OCI-LY7 (cell line): ENCODE measurements at regions of chr19 and their contacts with region 1.

Region 1: DNA sequence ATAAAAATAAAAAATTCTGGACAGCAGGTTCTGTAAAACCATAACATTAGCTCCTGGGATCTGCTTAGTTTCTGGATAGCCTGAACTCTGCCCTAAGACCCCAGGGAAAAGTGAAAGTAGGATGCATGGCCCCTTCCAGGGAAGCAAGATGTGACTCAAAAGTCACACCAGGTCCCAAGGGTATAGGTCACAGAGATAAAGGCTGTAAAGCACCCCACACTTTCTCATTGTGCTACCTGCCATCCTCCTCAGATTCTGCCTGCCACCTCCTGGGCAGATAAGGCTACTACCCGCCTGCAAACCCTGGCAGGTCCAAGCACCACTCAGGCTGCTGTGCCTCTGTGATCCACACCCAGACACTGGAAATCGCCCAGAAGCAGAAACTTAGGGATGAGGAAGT is 20.6 kb downstream of the FFAR2 start:
- DNase-seq: peak; percentile 76
- H3K4me3 ChIP-seq: no peak overlapping the region
- H3K27ac ChIP-seq: no peak overlapping the region
- H3K4me1 ChIP-seq: peaks cover 2% of the 10 kb centered on the region
- CTCF ChIP-seq: peak; percentile 81

Region 2: GRCh38 chr19:35269421-35270117 is 199.1 kb before region 1 on chr19:
- CTCF ChIA-PET with region 1: no interaction called
- POLR2A ChIA-PET with region 1: no interaction called
- intact Hi-C with region 1: loop called (anchors 1 kb)
- DNase-seq: peak; percentile 90
- H3K4me3 ChIP-seq: peak overlapping the region; percentile 75
- H3K27ac ChIP-seq: peak overlapping the region; percentile 61
- H3K4me1 ChIP-seq: peaks cover 43% of the 10 kb centered on the region
- CTCF ChIP-seq: peak; percentile 73

Region 3: GRCh38 chr19:35318650-35319448 is 149.8 kb before region 1 on chr19:
- CTCF ChIA-PET with region 1: no interaction called
- POLR2A ChIA-PET with region 1: no interaction called
- intact Hi-C with region 1: loop called (anchors 1 kb)
- DNase-seq: no peak
- H3K4me3 ChIP-seq: peak overlapping the region; percentile 1
- H3K27ac ChIP-seq: peak overlapping the region; percentile 88
- H3K4me1 ChIP-seq: peaks cover 86% of the 10 kb centered on the region
- CTCF ChIP-seq: no peak

Region 4: DNA sequence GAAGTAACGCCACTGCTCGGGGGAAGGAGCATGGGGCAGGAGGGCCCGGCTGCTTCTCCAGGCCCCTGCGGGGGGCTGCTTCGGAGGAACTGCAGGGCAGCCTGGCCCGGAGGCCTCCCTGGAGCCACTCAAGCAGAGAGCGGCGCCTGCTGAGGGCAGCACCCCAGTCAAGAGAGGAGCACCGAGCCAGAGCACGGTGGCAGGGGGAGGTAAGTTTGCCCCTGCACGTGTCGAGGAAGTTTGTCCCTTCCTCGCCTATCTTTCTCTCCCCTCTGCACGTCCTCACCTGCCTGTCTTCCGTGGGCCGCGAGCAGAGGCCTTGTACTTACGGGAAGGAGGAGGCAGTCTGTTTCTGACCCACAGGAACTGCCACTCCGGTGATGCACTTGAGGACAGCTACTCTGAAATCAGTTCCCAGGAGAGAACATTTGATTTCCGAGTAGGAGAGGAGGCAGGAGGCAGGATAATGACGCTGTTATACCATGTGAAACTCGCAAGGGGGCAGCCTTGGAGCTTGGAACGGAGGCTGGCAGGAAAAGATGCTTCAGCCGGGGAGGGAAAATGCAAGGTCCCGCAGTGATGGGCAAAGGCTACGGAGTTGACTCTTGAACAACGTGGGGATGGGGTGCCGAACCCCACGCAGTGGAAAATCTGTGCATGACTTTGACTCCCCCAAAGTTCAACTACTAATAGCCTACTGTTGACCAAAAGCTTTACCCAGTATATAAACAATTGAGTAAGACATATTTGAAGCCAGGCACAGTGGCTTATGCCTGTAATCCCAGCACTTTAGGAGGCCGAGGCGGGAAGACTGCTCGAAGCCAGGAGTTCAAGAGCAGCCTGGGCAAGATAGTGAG is 116.0 kb before region 1 on chr19:
- CTCF ChIA-PET with region 1: no interaction called
- POLR2A ChIA-PET with region 1: interaction called, 4 read pairs
- intact Hi-C with region 1: loop called (anchors 1 kb)
- DNase-seq: peak; percentile 78
- H3K4me3 ChIP-seq: no peak overlapping the region
- H3K27ac ChIP-seq: peak overlapping the region; percentile 27
- H3K4me1 ChIP-seq: peaks cover 54% of the 10 kb centered on the region
- CTCF ChIP-seq: peak; percentile 92

Region 5: GRCh38 chr19:35395382-35396199 is 73.0 kb before region 1 on chr19:
- CTCF ChIA-PET with region 1: no interaction called
- POLR2A ChIA-PET with region 1: no interaction called
- intact Hi-C with region 1: no loop called
- DNase-seq: no peak
- H3K4me3 ChIP-seq: no peak overlapping the region
- H3K27ac ChIP-seq: no peak overlapping the region
- H3K4me1 ChIP-seq: no peaks in the 10 kb centered on the region
- CTCF ChIP-seq: no peak